ENCODE measurements at regions of chr2 and their contacts with region 1.

Region 1: DNA sequence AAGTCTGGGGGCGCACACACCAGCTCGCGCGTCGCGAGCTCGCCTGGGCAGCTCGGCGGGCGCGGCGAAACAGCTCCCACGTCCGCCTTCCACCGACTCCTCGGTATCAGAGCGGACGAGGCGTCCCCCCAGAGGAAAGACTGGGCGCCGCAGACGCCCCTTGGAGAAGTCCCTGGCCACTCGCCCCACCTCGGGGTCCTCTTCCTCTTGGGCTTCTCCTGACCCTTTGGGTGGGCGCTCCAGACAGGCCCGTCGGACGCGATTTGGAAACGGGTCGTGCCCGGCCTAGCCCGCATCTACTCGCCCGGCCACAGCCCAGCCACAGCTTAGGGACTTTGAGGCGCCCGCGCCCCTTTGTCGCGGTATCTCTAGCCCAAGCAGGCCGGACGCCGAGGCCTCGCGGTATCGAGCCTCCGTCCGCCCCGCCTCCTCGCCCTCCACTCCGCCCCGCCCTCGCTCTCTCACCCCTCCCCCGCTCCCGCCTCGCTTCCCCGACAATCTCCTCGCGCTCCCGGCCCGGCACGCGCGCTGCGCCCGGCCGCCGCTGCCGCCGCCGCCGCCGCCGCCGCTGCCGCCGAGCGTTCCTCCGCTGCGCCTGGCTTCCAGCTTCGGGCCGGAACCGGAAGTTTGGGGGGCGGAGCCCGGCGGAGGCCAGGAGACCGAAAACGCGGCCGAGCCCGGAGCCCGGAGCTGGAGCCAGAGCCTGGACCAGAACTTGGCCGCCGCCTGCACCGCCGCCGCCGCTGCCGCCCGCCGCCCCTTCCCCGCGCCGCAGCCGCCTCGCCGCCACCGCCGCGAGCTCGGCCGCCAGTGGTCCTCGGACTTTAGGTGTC is 749 bp upstream of the ACVR2A start:
- DNase-seq: peak; percentile 85
- H3K4me3 Mint-ChIP-seq: peak overlapping the region; percentile 95
- H3K27ac Mint-ChIP-seq: peak overlapping the region; percentile 84
- H3K4me1 Mint-ChIP-seq: peaks cover 35% of the 10 kb centered on the region
- H3K27me3 Mint-ChIP-seq: peaks cover 52% of the 10 kb centered on the region

Region 2: DNA sequence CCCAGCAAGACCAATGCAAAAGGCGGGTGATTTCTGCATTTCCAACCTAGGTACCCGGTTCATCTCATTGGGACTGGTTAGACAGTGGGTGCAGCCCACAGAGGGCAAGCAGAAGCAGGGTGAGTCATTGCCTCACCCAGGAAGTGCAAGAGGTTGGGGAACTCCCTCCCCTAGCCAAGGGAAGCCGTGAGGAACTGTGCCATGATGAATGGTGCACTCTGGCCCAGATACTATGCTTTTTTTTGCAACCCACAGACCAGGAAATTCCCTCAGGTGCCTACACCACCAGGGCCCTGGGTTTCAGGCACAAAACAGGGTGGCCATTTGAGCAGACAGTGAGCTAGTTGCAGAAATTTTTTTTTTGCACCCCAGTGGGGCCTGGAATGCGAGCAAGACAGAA is 661.8 kb before region 1 on chr2:
- intact Hi-C with region 1: loop called (anchors 5 kb)
- DNase-seq: peak; percentile 67
- H3K4me3 Mint-ChIP-seq: peak overlapping the region; percentile 40
- H3K27ac Mint-ChIP-seq: peak overlapping the region; percentile 86
- H3K4me1 Mint-ChIP-seq: peaks cover 32% of the 10 kb centered on the region
- H3K27me3 Mint-ChIP-seq: peaks cover 5% of the 10 kb centered on the region

Region 3: DNA sequence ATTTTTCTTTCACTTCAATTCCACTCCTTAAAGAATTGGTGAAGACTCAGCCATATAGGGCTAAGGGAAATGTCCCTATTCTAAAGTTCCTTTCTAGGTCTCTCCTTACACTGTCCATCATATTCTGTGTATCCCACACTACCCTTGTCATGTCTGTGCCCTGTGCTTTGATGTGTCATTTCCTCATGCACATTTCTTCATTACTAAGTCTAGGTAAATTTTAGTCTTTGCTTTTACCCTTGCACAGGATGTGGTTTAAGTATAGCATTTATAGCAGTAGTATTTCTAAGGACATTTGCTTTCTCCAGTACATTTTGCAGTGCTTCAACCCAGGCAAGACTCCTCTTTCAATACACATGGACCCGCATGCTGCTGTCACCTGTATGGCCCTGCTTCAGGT is 220.8 kb before region 1 on chr2:
- intact Hi-C with region 1: loop called (anchors 2 kb)
- DNase-seq: no peak
- H3K4me3 Mint-ChIP-seq: peak overlapping the region; percentile 13
- H3K27ac Mint-ChIP-seq: peak overlapping the region; percentile 61
- H3K4me1 Mint-ChIP-seq: peaks cover 29% of the 10 kb centered on the region
- H3K27me3 Mint-ChIP-seq: no peaks in the 10 kb centered on the region

Region 4: DNA sequence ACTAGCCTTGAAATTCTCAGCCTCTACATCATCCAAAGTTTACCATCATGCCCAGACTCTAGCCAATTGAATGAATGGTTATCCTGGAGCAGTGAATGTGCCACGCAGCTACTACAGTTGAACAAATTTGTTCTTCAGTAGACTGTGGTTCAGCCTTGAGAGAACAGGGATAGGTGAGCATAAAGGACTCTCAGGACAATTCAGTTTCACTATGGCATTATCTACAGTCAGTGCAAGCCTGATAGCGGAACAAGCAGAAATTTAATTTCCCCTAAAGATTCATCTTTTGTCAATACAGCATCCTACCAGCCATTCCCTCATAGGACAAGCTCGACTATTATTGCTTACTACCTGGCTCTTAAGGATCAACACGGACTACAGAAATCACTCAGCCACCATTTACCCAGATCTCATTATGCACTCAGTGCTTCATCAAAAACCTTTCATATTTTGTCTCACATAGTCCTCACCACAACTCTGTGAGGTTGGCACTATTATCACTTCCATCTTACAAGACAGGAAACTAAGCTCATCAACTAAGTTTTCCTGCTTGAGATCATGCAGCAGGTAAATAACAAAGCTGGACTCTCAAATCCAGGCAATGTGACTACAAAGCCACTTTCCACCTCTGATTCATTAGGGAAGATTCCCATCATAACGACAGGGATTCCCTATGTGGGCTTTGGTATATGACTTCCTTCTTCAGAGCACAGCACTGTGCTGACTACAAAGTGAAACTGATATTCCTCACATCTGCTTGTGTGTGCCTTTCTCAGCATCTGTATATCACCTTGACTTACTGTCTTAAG is 180.7 kb before region 1 on chr2:
- intact Hi-C with region 1: loop called (anchors 1 kb)
- DNase-seq: peak; percentile 17
- H3K4me3 Mint-ChIP-seq: peak overlapping the region; percentile 46
- H3K27ac Mint-ChIP-seq: peak overlapping the region; percentile 69
- H3K4me1 Mint-ChIP-seq: peaks cover 24% of the 10 kb centered on the region
- H3K27me3 Mint-ChIP-seq: no peaks in the 10 kb centered on the region

Region 5: DNA sequence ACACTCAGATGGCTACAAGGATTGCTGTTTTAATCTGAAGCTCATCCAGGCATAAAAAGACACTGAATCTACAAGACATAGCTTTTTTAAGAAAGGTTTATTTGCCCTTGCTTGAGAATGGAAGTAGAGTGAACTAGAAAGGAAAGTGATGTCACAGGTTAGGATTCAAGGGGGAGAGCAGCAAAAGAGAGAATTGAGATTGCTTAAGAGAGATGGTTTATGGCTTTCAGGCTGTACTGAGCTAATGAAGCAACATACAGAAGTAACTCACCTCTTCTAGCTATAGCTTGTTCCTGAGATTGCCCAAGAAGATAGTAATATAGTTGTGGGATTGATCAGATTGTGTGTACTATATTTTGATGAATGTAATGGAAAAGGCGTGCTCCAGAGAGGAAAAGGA is 25.3 kb before region 1 on chr2:
- intact Hi-C with region 1: no loop called
- DNase-seq: no peak
- H3K4me3 Mint-ChIP-seq: no peak overlapping the region
- H3K27ac Mint-ChIP-seq: no peak overlapping the region
- H3K4me1 Mint-ChIP-seq: no peaks in the 10 kb centered on the region
- H3K27me3 Mint-ChIP-seq: peaks cover 15% of the 10 kb centered on the region

Region 6: GRCh38 chr2:147829106-147829505 is 15.0 kb before region 1 on chr2:
- intact Hi-C with region 1: no loop called
- DNase-seq: no peak
- H3K4me3 Mint-ChIP-seq: no peak overlapping the region
- H3K27ac Mint-ChIP-seq: no peak overlapping the region
- H3K4me1 Mint-ChIP-seq: no peaks in the 10 kb centered on the region
- H3K27me3 Mint-ChIP-seq: peaks cover 13% of the 10 kb centered on the region

Region 7: DNA sequence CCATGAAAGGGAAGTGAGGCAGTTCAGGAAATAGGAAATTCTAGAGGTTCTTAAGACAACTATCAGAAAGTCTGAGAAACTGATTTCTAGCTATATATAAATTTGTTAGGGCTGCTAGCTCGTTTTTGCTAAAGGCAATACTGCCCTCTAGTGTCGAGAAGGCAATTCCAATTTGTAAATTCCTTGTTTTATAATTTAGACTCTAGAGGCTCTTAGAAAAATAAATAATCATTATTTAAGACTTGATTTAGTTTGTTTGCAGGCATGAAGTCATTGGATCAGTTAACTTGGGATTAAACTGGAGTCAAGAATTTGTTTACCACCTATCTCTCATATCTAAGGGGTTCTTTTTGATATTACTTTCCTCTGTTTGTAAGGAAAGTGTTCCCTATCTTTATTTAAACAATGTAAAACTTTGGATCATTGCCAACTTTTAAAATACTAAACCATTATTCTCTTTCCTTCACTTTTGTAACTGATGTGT is 67.0 kb after region 1 on chr2:
- intact Hi-C with region 1: loop called (anchors 2 kb)
- DNase-seq: peak; percentile 4
- H3K4me3 Mint-ChIP-seq: no peak overlapping the region
- H3K27ac Mint-ChIP-seq: no peak overlapping the region
- H3K4me1 Mint-ChIP-seq: peaks cover 11% of the 10 kb centered on the region
- H3K27me3 Mint-ChIP-seq: peaks cover 2% of the 10 kb centered on the region

Region 8: GRCh38 chr2:148874868-148875341 is 1030.8 kb after region 1 on chr2 and contains the start of gene KIF5C:
- intact Hi-C with region 1: loop called (anchors 5 kb)
- DNase-seq: peak; percentile 77
- H3K4me3 Mint-ChIP-seq: peak within 1 kb of the TSS; percentile 91
- H3K27ac Mint-ChIP-seq: peak within 1 kb of the TSS; percentile 83
- H3K4me1 Mint-ChIP-seq: peaks cover 19% of the 10 kb centered on the region
- H3K27me3 Mint-ChIP-seq: peaks cover 18% of the 10 kb centered on the region
- total RNA-seq, gene KIF5C: 17.9 and 20.7 TPM in 2 replicates

Measured in activated T-helper 1 cell treated with anti-CD3 and anti-CD28 coated beads, Interleukin-12 subunit alpha, Interleukin-12 subunit beta, Interleukin-2, Interleukin-4 antibody, amounts not matched to agents 30 ng/mL and 10 ng/mL and 1 ng/mL, durations not matched to agents 14 hours and 24 hours and 36 hours (primary cell).